Activated CD8-positive, alpha-beta memory T cell treated with anti-CD3 and anti-CD28 coated beads, Interleukin-2, amount 10 ng/mL, durations not matched to agents 7 days and 5 days (primary cell): ENCODE measurements at regions of chr1 and their contacts with region 1.

Region 1: GRCh38 chr1:43073490-43074230 is 98.4 kb downstream of the EBNA1BP2 start:
- DNase-seq: peak; percentile 81
- ATAC-seq: peak; percentile 91
- H3K4me3 Mint-ChIP-seq: no peak overlapping the region
- H3K27ac Mint-ChIP-seq: peak overlapping the region; percentile 63
- H3K4me1 Mint-ChIP-seq: peaks cover 4% of the 10 kb centered on the region
- H3K27me3 Mint-ChIP-seq: no peaks in the 10 kb centered on the region

Region 2: DNA sequence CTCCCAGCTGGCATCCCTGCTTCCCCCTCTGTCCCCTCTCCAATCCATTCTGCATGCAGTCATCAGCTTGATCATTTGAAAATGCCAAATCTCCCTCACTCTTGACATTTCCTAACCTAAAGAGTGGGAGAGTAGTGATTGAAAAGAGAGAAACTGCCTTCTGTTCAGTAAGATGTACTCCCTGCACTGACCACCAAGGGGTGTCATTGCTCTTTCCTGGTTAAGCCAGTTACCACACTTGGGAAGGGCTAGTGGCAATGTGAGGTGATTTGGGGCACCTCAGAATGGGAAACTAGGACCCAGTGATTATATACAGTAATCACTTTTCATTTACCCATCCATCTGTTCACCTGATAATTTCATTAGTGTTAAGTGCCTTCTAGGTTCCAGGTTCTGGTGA is 295.8 kb before region 1 on chr1:
- CTCF ChIA-PET with region 1: interaction called, 67 read pairs
- DNase-seq: peak; percentile 50
- ATAC-seq: peak; percentile 65
- H3K4me3 Mint-ChIP-seq: no peak overlapping the region
- H3K27ac Mint-ChIP-seq: no peak overlapping the region
- H3K4me1 Mint-ChIP-seq: peaks cover 32% of the 10 kb centered on the region
- H3K27me3 Mint-ChIP-seq: no peaks in the 10 kb centered on the region

Region 3: GRCh38 chr1:42913426-42914091 is 160.1 kb before region 1 on chr1:
- CTCF ChIA-PET with region 1: interaction called, 275 read pairs
- DNase-seq: peak; percentile 76
- ATAC-seq: peak; percentile 75
- H3K4me3 Mint-ChIP-seq: no peak overlapping the region
- H3K27ac Mint-ChIP-seq: no peak overlapping the region
- H3K4me1 Mint-ChIP-seq: peaks cover 10% of the 10 kb centered on the region
- H3K27me3 Mint-ChIP-seq: peaks cover 2% of the 10 kb centered on the region

Region 4: DNA sequence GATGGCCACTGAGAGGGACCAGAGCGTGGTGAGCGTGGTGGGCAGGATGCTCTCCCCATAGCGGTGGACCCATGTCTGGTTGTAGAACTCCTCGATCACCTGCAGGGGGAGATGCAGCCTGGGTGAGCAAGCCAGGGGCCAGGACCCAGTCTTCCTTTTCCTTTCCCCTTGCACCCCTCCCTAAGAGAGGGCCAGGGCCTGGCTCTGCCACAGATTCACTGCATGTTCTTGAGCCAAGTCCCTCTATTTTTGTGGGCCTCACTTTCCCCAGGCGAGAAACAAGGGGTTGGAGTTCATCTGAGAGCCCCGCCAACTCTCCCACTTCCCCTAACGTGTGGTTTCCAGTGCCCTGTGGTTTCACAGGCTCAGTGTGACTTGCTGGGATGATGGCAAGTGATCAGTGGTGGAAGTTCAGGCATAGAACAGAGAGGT is 142.5 kb before region 1 on chr1:
- CTCF ChIA-PET with region 1: interaction called, 172 read pairs
- DNase-seq: peak; percentile 83
- ATAC-seq: peak; percentile 52
- H3K4me3 Mint-ChIP-seq: peak overlapping the region; percentile 67
- H3K27ac Mint-ChIP-seq: peak overlapping the region; percentile 96
- H3K4me1 Mint-ChIP-seq: peaks cover 87% of the 10 kb centered on the region
- H3K27me3 Mint-ChIP-seq: no peaks in the 10 kb centered on the region

Region 5: GRCh38 chr1:43021547-43022474 is 51.8 kb before region 1 on chr1:
- CTCF ChIA-PET with region 1: interaction called, 10 read pairs
- DNase-seq: no peak
- ATAC-seq: no peak
- H3K4me3 Mint-ChIP-seq: no peak overlapping the region
- H3K27ac Mint-ChIP-seq: no peak overlapping the region
- H3K4me1 Mint-ChIP-seq: no peaks in the 10 kb centered on the region
- H3K27me3 Mint-ChIP-seq: peaks cover 2% of the 10 kb centered on the region